ENCODE measurements at regions of chr9 and their contacts with region 1.

Region 1: GRCh38 chr9:35628389-35628991 is 10.3 kb upstream of the CD72 start:
- DNase-seq: no peak
- ATAC-seq: no peak
- H3K4me3 ChIP-seq: no peak overlapping the region
- H3K27ac ChIP-seq: no peak overlapping the region
- H3K4me1 ChIP-seq: peaks cover 13% of the 10 kb centered on the region
- H3K27me3 ChIP-seq: no peaks in the 10 kb centered on the region
- CTCF ChIP-seq: no peak
- EP300 ChIP-seq: no peak
- POLR2A ChIP-seq: no peak
- RAD21 ChIP-seq: no peak

Region 2: DNA sequence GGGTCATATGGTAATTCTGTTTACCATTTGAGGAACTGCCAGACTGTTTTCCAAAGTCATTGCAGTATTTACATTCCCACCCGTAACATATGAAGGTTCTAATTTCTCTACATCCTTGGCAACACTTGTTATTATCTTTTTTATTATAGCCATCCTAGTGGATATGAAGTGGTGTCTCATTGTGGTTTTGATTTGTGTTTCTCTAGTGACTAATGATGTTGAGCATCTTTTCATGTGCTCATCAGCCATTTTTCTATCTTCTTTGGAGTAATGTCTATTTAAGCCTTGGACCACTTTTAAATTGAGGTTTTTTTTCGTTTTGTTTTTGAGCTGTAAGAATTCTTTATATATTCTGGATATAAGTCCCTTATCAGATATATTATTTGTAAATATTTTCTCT is 271.4 kb before region 1 on chr9:
- CTCF ChIA-PET with region 1: no interaction called
- POLR2A ChIA-PET with region 1: no interaction called
- RAD21 ChIA-PET with region 1: no interaction called
- SMC1A ChIA-PET with region 1: no interaction called
- in situ Hi-C with region 1: no loop called
- intact Hi-C with region 1: no loop called
- DNase-seq: no peak
- ATAC-seq: no peak
- H3K4me3 ChIP-seq: no peak overlapping the region
- H3K27ac ChIP-seq: no peak overlapping the region
- H3K4me1 ChIP-seq: no peaks in the 10 kb centered on the region
- H3K27me3 ChIP-seq: no peaks in the 10 kb centered on the region
- CTCF ChIP-seq: no peak
- EP300 ChIP-seq: no peak
- POLR2A ChIP-seq: no peak
- RAD21 ChIP-seq: no peak

Region 3: GRCh38 chr9:35611230-35611797 is 17.2 kb before region 1 on chr9:
- CTCF ChIA-PET with region 1: interaction called, 15 read pairs
- POLR2A ChIA-PET with region 1: interaction called, 6 read pairs
- RAD21 ChIA-PET with region 1: interaction called, 3 read pairs
- SMC1A ChIA-PET with region 1: interaction called, 5 read pairs
- in situ Hi-C with region 1: no loop called
- intact Hi-C with region 1: no loop called
- DNase-seq: no peak
- ATAC-seq: peak; percentile 93
- H3K4me3 ChIP-seq: no peak overlapping the region
- H3K27ac ChIP-seq: no peak overlapping the region
- H3K4me1 ChIP-seq: peaks cover under 1% of the 10 kb centered on the region; the same call in 1 of the 2 replicates
- H3K27me3 ChIP-seq: no peaks in the 10 kb centered on the region
- CTCF ChIP-seq: peak; percentile 73 to 80 (median 77)
- EP300 ChIP-seq: no peak
- POLR2A ChIP-seq: no peak
- RAD21 ChIP-seq: peak; percentile 39